Left cardiac atrium (tissue), 4 donors: ENCODE measurements at regions of chr5 and their contacts with region 1.

Region 1: GRCh38 chr5:156584528-156585270 is 257.7 kb downstream of the SGCD start:
- DNase-seq: no peak
- ATAC-seq: peak; percentile 41 to 81

Region 2: DNA sequence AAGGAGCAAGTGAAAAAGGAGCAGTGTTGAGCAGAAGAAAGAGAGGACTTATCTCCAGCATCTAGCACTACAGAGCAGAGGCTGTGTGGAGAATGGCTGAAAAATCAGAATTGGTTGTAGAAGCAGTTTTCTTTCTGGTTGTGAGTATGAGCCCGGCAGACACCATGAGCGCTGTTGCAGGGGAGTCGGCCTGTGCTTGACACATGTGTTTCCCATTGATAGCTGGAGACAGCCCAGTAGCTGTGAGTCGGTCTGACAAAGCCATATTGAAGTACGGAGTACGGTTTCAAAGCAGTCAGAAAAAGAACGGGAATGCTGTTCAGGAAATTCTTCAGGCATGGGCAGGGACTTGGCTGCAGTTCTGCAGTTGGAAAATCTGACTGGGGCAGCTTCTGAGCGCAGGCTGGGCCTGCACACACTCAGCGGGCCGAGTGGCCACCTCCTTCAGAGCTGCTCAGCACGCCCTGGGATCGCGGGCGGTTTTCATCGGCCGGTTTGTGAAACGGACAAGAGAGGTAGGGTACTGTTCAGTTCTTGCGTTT is 257.9 kb before region 1 on chr5 and contains the start of gene SGCD:
- intact Hi-C with region 1: loop called in 1 of 2 experiments (anchors 5 kb)
- DNase-seq: peak; percentile 88
- ATAC-seq: peak; percentile 86 to 97
- total RNA-seq, gene SGCD: 58.5 to 93.4 TPM

Region 3: GRCh38 chr5:156394642-156395305 is 189.9 kb before region 1 on chr5:
- intact Hi-C with region 1: loop called in 1 of 2 experiments (anchors 5 kb)
- DNase-seq: no peak
- ATAC-seq: peak; percentile 19 to 51

Region 4: DNA sequence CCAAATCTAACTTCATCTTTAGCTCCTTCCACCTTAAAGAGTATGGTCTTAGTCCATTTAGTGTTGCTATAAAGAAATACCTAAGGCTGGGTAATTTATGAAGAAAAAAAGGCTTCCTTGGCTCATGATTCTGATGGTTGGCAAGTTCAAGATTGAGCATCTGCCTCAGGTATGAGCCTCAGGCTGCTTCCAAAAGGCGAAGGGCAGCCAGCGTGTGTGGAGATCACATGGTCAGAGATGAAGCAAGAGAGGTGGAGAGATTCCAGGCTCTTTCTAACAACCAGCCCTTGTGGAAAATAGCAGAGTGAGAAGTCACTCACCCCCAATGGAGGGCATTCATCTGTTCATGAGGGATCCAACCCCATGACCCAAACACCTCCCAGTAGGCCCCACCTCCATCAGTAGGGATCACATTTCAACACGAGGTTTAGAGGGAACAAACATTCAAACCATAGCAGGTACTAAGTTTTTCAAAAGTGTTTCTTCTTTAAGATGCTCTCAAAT is 31.8 kb before region 1 on chr5:
- intact Hi-C with region 1: no loop called
- DNase-seq: no peak
- ATAC-seq: no peak

Region 5: GRCh38 chr5:156686796-156687195 is 102.1 kb after region 1 on chr5:
- intact Hi-C with region 1: loop called in 1 of 2 experiments (anchors 10 kb)
- DNase-seq: no peak
- ATAC-seq: peak; percentile 61 to 81

Region 6: DNA sequence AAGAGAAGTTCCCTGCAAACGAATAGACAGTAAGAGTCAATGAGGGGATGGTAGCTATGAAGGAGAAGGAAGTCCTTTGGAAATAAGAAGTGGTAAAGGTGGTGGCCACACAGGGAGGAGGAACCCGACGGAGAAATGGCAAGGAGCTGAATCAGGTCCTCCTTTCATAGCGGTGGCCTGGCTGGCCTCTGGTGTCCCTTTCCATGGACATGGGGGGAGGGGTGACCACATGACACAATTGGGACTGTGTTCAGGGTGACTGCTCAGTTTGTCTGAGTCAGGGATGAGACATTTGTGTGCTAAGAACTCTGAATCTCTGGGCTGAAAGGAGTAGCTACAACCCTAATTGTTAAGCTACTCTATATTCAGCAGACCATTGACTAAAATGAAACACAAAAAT is 407.0 kb after region 1 on chr5:
- intact Hi-C with region 1: no loop called
- DNase-seq: no peak
- ATAC-seq: no peak